Gastrocnemius medialis (tissue), 4 donors: ENCODE measurements at regions of chr19 and their contacts with region 1.

Region 1: GRCh38 chr19:58305065-58305931 is at the start of gene ERVK3-1:
- DNase-seq: peak; percentile 93 to 96
- ATAC-seq: peak; percentile 99
- H3K4me3 ChIP-seq: peak within 1 kb of the TSS; percentile 66 to 93 (median 86)
- H3K27ac ChIP-seq: peak within 1 kb of the TSS; percentile 85 to 93 (median 89)
- H3K4me1 ChIP-seq: peaks cover 12 to 14% of the 10 kb centered on the region in 2 donors
- H3K27me3 ChIP-seq: peaks cover 0 to 5% (median 0%) of the 10 kb centered on the region in 3 donors
- CTCF ChIP-seq: peak in 3 of 5 experiments; percentile 24 to 45 (median 24)
- POLR2A ChIP-seq: peak; percentile 84 to 87
- total RNA-seq, gene ERVK3-1: 27.1 to 38.2 (median 32.4) TPM

Region 2: DNA sequence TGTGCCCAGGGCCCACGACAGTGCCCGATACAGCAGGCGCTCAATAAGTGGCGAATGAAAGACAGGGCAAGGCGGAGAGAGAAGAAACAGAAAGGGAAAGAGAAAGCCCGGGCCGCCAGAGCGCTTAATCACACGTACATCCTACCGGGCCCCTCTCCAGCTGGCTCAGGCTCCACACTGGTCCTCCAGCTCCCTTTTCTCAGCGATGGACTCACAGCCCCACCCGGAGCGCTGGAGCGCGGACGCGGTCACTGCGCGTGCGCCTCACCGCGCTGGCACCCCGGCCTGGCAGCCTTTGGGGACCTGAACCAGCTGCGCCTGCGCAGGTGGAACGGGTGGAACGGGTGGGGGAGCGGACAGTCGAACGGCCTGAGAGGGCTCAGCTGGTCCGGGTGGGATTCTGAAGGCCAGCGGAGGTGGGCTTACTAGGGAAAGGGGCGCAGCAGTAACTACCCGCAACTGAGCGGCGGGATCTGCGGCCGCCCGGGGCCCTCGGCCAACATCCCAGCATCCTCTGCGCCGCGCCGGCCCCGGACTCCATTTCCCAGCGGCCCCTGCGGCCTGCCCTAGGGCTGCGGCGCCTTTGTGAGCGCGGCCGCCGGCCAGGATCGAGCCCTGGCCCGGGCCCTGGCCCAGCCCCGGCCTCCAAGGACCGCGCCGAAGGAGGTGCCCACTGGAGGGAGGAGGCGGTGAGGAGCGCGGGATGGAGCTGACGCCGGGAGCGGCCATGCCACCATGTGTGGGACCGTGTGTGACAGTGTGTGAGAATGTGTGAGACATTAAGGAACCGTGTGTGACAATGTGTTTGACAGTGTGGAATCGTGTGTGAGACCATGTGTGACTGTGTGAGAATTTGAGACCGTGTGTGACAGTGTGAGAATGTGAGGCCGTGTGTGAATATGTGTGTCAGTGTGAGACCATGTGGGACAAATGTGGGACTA is 1901.3 kb before region 1 on chr19 and contains the start of gene ZNF583:
- in situ Hi-C with region 1: no loop called
- intact Hi-C with region 1: loop called (anchors 10 kb)
- DNase-seq: peak; percentile 89 to 97
- ATAC-seq: peak; percentile 96 to 99
- H3K4me3 ChIP-seq: peak within 1 kb of the TSS; percentile 66 to 95 (median 84)
- H3K27ac ChIP-seq: peak within 1 kb of the TSS; percentile 90 to 93 (median 92)
- H3K4me1 ChIP-seq: peaks cover 12 to 14% of the 10 kb centered on the region in 2 donors
- H3K27me3 ChIP-seq: no peaks in the 10 kb centered on the region
- CTCF ChIP-seq: no peak
- POLR2A ChIP-seq: no peak
- total RNA-seq, gene ZNF583: 3.5 to 9.2 (median 4.3) TPM

Region 3: GRCh38 chr19:58278157-58279041 is 26.9 kb before region 1 on chr19 and contains the start of gene ZNF8:
- in situ Hi-C with region 1: no loop called
- intact Hi-C with region 1: loop called (anchors 1 kb)
- DNase-seq: peak; percentile 85 to 89
- ATAC-seq: peak; percentile 94 to 95
- H3K4me3 ChIP-seq: peak within 1 kb of the TSS; percentile 74 to 82 (median 78)
- H3K27ac ChIP-seq: peak within 1 kb of the TSS; percentile 72 to 91 (median 83)
- H3K4me1 ChIP-seq: peaks cover 4 to 15% of the 10 kb centered on the region in 2 donors
- H3K27me3 ChIP-seq: peaks cover 0 to 10% (median 7%) of the 10 kb centered on the region in 3 donors
- CTCF ChIP-seq: no peak
- POLR2A ChIP-seq: peak; percentile 20 to 39
- total RNA-seq, gene ZNF8: 0.78 to 2.1 (median 1.2) TPM

Region 4: GRCh38 chr19:58362272-58362994 is 57.1 kb after region 1 on chr19 and contains the start of gene ZNF497:
- in situ Hi-C with region 1: no loop called
- intact Hi-C with region 1: loop called (anchors 2 kb)
- DNase-seq: peak; percentile 92 to 93
- ATAC-seq: peak; percentile 94 to 96
- H3K4me3 ChIP-seq: peak within 1 kb of the TSS; percentile 78 to 95 (median 90)
- H3K27ac ChIP-seq: peak within 1 kb of the TSS; percentile 87 to 92 (median 91)
- H3K4me1 ChIP-seq: peaks cover 0 to 8% of the 10 kb centered on the region in 2 donors
- H3K27me3 ChIP-seq: peaks cover 0 to 2% (median 0%) of the 10 kb centered on the region in 3 donors
- CTCF ChIP-seq: peak in 2 of 5 experiments; percentile 2 to 17
- POLR2A ChIP-seq: peak; percentile 61 to 62
- total RNA-seq, gene ZNF497: 0.07 to 0.87 (median 0.36) TPM in 3 of 4 donors, not detected in the other

Region 5: DNA sequence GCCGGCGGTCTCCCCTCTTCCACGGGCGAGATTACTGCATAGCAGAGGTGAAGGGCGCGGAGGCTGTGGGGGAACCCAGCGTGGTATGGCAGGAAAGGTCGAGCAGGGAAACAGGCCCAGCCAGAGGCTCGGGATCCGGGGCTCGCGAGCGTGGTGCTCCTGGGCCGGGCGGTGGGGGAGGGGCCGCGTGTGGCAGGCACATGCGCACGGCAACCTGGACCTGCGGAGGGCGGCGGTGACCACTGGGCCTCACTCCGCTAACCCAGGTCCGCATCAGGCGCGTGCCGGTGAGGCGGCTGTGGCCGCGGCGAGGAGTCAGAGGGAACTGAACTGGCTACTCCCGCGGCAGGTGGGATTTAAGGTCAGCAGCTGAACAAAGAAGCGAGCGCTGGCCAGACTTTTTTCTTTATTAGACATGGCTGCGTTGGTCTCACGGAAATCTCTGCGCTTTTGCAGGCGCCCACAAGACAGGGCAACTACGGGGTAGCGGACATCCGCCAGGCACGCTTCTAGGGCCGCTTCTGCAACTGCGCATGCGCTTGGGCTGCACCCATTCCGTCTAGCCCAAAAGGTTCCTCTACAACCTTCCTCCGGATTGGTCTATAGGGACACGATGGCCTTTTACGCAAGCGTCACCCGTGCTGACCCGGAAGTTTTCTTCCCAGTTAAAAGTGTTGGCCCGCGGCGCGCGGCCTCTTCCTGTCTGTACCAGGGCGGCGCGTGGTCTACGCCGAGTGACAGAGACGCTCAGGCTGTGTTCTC is 81.5 kb after region 1 on chr19 and contains the start of gene RPS5:
- in situ Hi-C with region 1: no loop called
- intact Hi-C with region 1: loop called (anchors 1 kb)
- DNase-seq: peak; percentile 96 to 97
- ATAC-seq: peak; percentile 99
- H3K4me3 ChIP-seq: peak within 1 kb of the TSS; percentile 75 to 89 (median 78)
- H3K27ac ChIP-seq: peak within 1 kb of the TSS; percentile 95 to 100 (median 99)
- H3K4me1 ChIP-seq: peaks cover 33 to 35% of the 10 kb centered on the region in 2 donors
- H3K27me3 ChIP-seq: no peaks in the 10 kb centered on the region
- CTCF ChIP-seq: no peak
- POLR2A ChIP-seq: peak; percentile 85 to 88
- total RNA-seq, gene RPS5: 1,345 to 1,665 (median 1,438) TPM

Region 6: DNA sequence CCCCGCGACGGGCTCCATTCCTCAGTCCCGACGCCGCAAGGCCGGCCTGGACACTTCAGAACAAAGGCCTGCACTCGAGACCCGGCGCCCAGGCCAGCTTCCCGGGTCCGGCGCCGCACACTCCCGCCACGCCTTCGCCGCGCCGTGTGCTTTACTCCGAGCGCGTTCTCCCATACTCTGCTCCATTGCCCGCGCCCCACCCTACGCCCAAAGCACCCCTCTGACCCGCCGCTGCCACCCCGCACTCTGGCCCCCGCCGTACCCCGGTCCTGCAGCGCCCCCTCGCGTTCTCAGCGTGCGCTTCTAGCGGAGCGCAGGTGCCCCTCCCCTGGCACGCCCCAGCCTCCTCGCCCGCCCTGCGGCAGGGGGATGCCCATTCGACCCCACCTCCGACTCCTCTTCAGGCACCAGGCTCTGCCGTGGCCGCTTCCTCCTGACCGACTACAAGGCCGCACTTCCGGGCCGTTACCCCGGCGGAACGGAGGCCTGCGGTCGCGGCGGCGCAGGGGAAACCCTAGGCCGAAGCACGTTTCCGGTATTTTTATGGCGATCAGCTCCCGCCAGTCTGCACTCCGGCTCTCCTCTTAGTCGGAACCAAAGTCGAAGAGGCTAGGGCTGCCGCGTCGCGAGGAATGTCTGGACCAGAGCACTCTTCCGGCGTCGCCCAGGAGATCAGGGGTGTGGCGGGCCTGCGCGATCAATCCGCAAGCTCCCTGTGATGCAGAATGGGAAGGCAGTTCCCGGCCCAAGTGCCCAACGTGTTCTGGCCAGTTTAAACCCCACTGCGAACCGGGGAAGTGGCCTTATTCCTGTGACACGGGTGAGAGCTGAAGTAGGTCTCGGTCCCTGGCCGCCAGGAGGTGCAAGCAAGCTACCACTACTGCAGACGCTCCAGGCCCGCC is 214.3 kb after region 1 on chr19 and contains the start of gene ZBTB45:
- in situ Hi-C with region 1: no loop called
- intact Hi-C with region 1: loop called (anchors 1 kb)
- DNase-seq: peak; percentile 86 to 90
- ATAC-seq: peak; percentile 93
- H3K4me3 ChIP-seq: peak within 1 kb of the TSS; percentile 69 to 88 (median 80)
- H3K27ac ChIP-seq: peak within 1 kb of the TSS; percentile 84 to 96 (median 94)
- H3K4me1 ChIP-seq: peaks cover 31 to 36% of the 10 kb centered on the region in 2 donors
- H3K27me3 ChIP-seq: no peaks in the 10 kb centered on the region
- CTCF ChIP-seq: peak; percentile 74 to 92 (median 87)
- POLR2A ChIP-seq: peak; percentile 11 to 34
- total RNA-seq, gene ZBTB45: 5.9 to 12.2 (median 9.6) TPM